HEK293 (cell line): ENCODE measurements at regions of chr11 and their contacts with region 1.

Region 1: GRCh38 chr11:62108017-62108750 is 15.6 kb upstream of the INCENP start:
- H3K4me3 ChIP-seq: no peak overlapping the region
- H3K27ac ChIP-seq: no peak overlapping the region
- H3K4me1 ChIP-seq: no peaks in the 10 kb centered on the region
- CTCF ChIP-seq: peak; percentile 27; the same call in 1 of the 2 replicates

Region 2: DNA sequence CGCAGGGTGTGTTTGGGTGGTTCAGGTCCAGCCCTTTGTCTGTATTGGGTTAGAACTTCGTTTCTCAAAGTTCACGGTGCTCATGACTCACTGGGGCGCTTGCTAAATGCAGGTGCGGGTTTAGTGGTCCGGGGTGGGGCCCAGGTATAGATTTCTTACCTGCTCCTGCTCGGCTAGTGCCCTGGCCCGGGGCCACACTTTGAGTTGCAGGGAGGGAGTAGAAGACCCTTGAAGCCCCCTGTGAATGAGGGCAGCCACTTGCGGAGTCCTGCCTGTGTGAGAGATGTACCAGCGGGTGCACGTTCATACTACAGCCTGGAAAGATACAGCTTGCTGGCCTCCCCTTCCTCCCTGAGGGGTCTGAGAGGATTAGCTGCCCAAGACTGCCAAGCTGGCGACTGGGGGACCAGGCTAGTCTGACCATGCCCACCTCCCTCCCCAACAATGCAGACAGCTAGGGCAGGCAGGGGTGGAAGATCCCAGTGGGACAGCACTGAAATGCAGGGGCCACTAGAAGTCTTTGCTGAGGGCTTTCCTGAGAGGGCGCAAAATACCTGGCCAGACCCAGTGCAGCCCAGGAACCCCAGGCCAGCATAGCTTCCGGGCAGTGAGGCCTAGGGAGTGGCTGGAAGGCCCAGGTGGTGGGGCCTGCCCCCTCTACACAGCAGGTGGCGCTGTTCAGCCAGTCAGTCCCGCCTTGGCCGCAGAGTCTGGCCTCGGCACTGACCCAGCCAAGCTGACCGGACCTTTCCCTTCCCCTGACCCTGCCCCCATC is 360.8 kb before region 1 on chr11:
- CTCF ChIA-PET with region 1: interaction called, 15 read pairs
- POLR2A ChIA-PET with region 1: no interaction called
- H3K4me3 ChIP-seq: no peak overlapping the region
- H3K27ac ChIP-seq: no peak overlapping the region
- H3K4me1 ChIP-seq: no peaks in the 10 kb centered on the region
- CTCF ChIP-seq: peak; percentile 63

Region 3: DNA sequence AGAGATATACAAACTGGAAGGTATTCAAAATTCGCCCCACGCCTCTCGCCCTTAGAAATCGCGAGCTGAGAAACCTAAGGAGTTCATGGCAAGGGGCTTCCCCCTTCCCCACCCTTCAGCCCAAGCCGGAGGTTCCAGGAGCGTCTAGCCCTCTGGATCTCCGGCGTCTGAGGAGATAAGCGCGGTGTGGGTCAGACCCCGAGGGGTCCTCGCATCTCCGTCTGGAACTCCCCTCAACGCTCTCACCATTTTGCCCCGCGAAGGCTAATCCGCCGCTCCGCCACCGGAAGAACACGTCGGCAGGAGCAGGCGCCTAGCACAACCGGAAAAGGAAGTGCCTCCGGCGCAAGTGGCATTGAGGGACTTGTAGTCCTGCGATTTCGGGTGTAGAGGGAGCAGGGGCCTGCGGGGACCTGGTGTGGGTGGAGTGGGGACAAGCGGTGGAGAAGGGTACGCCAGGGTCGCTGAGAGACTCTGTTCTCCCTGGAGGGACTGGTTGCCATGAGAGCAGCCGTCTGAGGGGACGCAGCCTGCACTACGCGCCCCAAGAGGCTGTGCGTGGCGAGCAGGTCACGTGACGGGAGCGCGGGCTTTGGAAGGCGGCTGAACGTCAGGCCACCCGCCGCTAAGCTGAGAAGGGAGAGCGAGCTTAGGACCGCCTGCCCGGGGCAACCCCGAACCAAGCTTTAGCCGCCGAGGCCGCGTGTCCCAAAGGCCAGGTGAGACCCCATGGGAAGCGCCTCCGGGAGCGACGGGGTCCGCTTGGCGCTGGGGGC is 315.7 kb before region 1 on chr11 and contains the starts of genes FEN1 and TMEM258:
- CTCF ChIA-PET with region 1: interaction called, 39 read pairs
- POLR2A ChIA-PET with region 1: no interaction called
- H3K4me3 ChIP-seq: peak within 1 kb of the TSS; percentile 87
- H3K27ac ChIP-seq: peak within 1 kb of the TSS; percentile 89
- H3K4me1 ChIP-seq: 0 out of 2 replicates have a peak, but pooled peaks cover 1% of the 10 kb centered on the region
- CTCF ChIP-seq: no peak

Region 4: GRCh38 chr11:61871158-61871597 is 237.0 kb before region 1 on chr11:
- CTCF ChIA-PET with region 1: interaction called, 45 read pairs
- POLR2A ChIA-PET with region 1: no interaction called
- H3K4me3 ChIP-seq: no peak overlapping the region
- H3K27ac ChIP-seq: no peak overlapping the region
- H3K4me1 ChIP-seq: no peaks in the 10 kb centered on the region
- CTCF ChIP-seq: peak; percentile 95

Region 5: GRCh38 chr11:61904539-61905048 is 203.6 kb before region 1 on chr11:
- CTCF ChIA-PET with region 1: interaction called, 108 read pairs
- POLR2A ChIA-PET with region 1: no interaction called
- H3K4me3 ChIP-seq: no peak overlapping the region
- H3K27ac ChIP-seq: no peak overlapping the region
- H3K4me1 ChIP-seq: no peaks in the 10 kb centered on the region
- CTCF ChIP-seq: no peak

Region 6: GRCh38 chr11:62088331-62088933 is 19.8 kb before region 1 on chr11:
- CTCF ChIA-PET with region 1: interaction called, 48 read pairs
- POLR2A ChIA-PET with region 1: no interaction called
- H3K4me3 ChIP-seq: no peak overlapping the region
- H3K27ac ChIP-seq: no peak overlapping the region
- H3K4me1 ChIP-seq: no peaks in the 10 kb centered on the region
- CTCF ChIP-seq: no peak

Region 7: GRCh38 chr11:62122076-62122475 is 13.9 kb after region 1 on chr11:
- CTCF ChIA-PET with region 1: interaction called, 27 read pairs
- POLR2A ChIA-PET with region 1: interaction called, 4 read pairs
- H3K4me3 ChIP-seq: no peak overlapping the region
- H3K27ac ChIP-seq: no peak overlapping the region
- H3K4me1 ChIP-seq: peaks cover 4% of the 10 kb centered on the region; the same call in 1 of the 2 replicates
- CTCF ChIP-seq: 0 out of 2 replicates have a peak, but pooled peaks have one; percentile 18

Region 8: GRCh38 chr11:62208785-62209144 is 100.6 kb after region 1 on chr11:
- CTCF ChIA-PET with region 1: no interaction called
- POLR2A ChIA-PET with region 1: no interaction called
- H3K4me3 ChIP-seq: no peak overlapping the region
- H3K27ac ChIP-seq: no peak overlapping the region
- H3K4me1 ChIP-seq: no peaks in the 10 kb centered on the region
- CTCF ChIP-seq: no peak